ENCODE measurements at regions of chr4 and their contacts with region 1.

Region 1: DNA sequence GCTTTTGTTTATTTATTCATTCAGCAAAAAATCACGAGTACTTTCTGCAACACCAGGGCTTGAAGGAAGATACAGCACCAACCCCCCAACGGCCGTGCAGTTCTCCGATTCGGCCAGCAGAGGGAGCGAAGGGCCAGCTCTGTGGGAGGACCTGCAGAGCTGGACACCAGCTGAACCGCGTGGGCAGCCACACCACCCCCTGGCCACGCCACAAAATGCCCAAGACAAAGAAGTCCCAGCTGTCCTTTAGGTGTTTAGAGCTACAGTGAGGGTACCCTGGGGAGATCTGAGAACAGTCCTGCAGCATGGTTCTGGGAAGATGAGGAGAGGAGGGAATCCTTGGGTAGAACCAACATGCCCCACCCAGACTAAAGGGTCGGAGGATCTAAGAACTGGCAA is 83.1 kb downstream of the RELL1 start:
- DNase-seq: peak; percentile 84
- CTCF ChIP-seq: peak; percentile 93

Region 2: DNA sequence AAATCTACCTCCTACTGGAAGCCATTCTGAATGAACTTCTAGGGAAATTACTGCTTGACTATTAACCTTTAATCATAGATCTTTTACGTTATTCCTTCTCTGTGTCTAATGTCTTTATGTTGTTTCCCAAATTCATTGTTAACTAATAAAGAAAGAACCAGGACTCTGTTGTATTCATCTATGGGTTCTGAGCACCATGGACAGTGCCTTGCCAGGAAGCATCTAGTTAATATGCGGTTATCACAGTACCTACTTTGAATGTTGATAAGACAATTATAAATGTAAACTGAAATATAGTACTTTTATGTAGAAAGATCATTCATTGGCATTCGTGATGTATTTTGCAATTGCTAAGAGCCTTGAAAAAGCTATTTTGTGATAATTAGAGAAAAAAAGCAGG is 334.8 kb before region 1 on chr4:
- CTCF ChIA-PET with region 1: no interaction called
- POLR2A ChIA-PET with region 1: no interaction called
- DNase-seq: no peak
- CTCF ChIP-seq: no peak

Region 3: GRCh38 chr4:37615059-37615719 is 12.1 kb after region 1 on chr4:
- CTCF ChIA-PET with region 1: interaction called, 88 read pairs
- POLR2A ChIA-PET with region 1: no interaction called
- DNase-seq: no peak
- CTCF ChIP-seq: no peak

Region 4: DNA sequence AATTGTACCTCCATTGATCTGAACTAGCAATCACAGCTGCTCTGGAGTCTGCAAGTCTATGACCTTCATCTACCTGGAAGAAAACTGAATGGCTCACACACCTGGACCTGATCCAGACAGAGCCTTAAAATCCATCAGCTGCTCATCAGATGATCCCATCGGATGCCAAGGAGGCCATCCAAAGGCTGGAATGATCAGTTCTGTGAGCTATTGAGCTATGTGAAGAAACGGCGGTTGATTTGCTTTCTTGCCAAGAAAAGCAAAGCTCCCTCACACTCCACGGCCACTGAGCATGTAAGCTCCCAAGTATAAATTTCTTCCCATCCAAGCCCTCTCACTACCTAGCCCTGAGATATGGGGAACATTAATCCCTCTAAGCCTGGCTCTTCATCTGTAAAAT is 20.1 kb after region 1 on chr4:
- CTCF ChIA-PET with region 1: interaction called, 88 read pairs
- POLR2A ChIA-PET with region 1: no interaction called
- DNase-seq: no peak
- CTCF ChIP-seq: no peak

Region 5: DNA sequence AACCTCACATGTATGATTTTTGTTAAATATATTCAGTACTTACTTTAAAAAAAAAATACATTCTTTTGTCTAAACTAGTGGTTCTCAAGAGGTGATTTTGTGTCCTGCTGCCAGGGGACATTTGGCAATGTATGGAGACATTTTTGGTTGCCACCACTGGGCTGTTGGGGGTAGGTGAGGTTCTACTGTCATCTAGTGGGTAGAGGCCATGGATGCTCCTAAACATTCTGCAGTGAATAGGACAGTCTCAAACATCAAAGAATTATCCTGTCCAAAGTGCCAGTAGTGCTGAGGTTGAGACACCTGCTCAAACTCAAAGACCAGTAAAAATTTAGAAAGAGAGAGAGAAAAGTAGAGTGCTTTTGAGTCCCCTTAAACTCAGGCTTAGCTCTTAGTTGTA is 190.5 kb after region 1 on chr4:
- CTCF ChIA-PET with region 1: interaction called, 55 read pairs
- POLR2A ChIA-PET with region 1: no interaction called
- DNase-seq: no peak
- CTCF ChIP-seq: peak; percentile 18

Region 6: GRCh38 chr4:38030023-38030422 is 427.0 kb after region 1 on chr4:
- CTCF ChIA-PET with region 1: interaction called, 19 read pairs
- POLR2A ChIA-PET with region 1: no interaction called
- DNase-seq: no peak
- CTCF ChIP-seq: no peak

Region 7: DNA sequence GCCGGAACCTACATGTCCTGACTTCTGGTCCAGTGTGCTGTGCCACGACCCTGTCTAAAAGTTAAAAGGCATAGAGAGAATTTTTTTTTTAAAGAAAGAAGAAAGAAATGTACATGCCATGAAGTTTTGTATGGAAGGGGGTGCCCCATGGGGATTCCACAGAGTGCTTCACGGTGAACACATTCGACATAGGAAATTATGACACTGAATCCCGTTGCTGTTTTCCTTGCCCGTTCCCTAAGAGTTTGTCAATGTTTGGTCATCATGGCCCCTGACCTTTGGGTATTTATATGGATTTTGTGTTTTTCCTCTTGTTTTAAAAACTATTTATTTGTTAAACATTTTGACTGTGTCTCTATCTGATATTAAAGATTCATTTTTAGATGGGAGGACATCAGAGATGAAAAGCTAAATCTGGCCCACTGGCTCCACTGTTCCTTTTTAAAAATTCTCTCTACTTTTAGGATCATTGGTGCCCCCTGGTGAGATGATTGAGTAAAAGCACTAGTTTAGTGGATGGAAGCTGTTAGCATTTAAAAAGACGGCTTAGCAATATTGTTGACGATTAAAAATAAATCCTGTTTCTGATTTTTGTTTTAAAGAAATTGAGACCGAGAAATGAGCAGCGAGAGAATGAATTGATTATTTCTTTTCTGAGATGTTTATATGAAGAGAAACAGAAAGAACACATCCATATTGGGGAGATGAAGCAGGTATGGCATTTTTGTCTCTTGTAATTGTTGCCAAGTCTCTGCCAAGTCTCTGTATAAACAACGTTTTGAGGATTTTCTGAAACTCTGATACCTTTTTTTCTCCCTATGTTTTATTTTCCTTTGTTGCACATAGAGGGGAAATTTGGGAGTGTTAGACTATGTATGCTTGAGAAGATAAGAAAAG is 432.2 kb after region 1 on chr4:
- CTCF ChIA-PET with region 1: interaction called, 19 read pairs
- POLR2A ChIA-PET with region 1: no interaction called
- DNase-seq: peak; percentile 70
- CTCF ChIP-seq: peak; percentile 59

Measured in GM10248 (cell line).